Left ventricle myocardium superior (tissue), 1 donor: ENCODE measurements at regions of chr4 and their contacts with region 1.

Region 1: GRCh38 chr4:87657525-87657924 is 7.4 kb downstream of the DMP1 start:
- DNase-seq: no peak
- ATAC-seq: no peak

Region 2: DNA sequence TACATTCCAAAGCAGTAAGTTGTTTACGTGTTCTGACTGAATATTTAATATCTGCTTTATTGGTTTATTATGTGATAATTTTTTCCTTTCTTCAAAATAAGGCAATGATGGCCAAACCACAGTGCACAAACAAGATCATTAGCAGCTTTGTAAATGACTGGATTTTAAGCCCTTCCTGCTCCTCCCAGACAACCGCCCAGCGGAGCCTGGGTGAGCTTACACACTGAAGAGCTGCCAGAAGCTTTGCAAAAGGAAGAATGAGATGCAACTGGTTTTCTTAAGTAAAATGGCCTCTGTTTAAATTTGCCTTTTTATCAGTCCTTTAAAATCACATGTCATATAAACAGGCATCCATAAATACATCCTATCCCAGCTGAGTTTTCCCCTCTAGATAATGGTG is 180.6 kb before region 1 on chr4:
- intact Hi-C with region 1: no loop called
- DNase-seq: no peak
- ATAC-seq: no peak

Region 3: GRCh38 chr4:87543835-87544461 is 113.6 kb before region 1 on chr4:
- intact Hi-C with region 1: loop called (anchors 10 kb)
- DNase-seq: no peak
- ATAC-seq: peak; percentile 54

Region 4: DNA sequence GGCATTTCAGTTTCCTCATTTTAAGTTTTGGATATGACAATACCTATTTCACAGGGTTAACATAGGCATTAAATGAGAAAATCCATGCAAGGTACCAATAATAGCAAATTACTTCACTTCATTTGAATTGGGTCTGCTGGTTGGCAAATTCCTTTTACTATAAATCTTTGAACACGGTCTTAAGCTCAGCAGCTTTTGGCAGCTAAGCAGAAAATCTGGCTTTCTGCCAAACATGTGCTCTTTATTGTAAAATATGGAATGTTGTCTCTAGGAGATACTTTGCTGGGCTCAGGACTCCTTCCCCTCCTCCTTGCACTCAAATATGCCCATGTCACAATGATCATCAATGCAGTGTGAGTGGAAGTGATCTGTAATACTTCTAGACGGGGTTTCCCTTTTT is 24.3 kb before region 1 on chr4:
- intact Hi-C with region 1: loop called (anchors 2 kb)
- DNase-seq: no peak
- ATAC-seq: peak; percentile 37